Left cardiac atrium (tissue), 4 donors: ENCODE measurements at regions of chr4 and their contacts with region 1.

Region 1: DNA sequence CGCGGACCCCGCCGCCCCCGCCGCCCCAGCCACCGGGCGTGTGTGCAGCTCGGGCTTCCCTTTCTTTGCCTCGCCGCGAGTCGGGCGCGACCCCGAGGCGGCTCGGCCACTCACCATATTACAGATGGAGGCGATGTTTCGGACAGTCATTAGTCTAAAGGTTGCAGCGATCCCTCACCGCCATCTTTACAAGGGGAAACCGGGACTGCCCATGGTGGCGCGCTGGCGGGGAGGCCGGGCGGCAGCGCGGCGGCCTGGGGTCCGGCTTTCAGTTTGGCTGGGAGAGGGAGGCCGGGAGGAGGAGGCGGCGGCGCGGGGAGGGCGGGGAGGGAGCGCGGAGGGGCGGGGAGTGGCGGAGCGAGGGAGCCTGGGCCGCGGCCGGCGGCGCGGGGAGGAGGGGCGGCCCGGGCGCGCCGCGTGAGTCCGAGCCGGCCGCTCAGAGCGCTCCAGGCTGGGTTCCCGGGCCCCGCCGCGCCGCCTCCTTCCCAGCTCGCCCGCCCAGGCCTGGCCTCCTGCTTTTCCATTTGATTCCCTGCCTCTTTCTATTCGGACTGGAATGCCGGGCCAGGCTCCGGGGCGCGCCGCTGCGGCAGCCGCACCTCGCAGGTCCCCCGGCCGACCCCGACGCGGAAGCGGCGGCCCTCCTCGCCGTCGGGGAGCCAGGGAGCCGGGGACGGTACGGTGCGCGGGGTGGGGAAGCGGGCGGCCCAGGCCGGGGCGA is at the start of gene USP46:
- DNase-seq: peak; percentile 84
- ATAC-seq: peak; percentile 96 to 97
- total RNA-seq, gene USP46: 40.7 to 48.0 TPM

Region 2: GRCh38 chr4:52545099-52546069 is 113.8 kb before region 1 on chr4:
- intact Hi-C with region 1: loop called (anchors 5 kb)
- DNase-seq: peak; percentile 82
- ATAC-seq: peak; percentile 82 to 94